Stomach (tissue), 19 donors: ENCODE measurements at regions of chr12 and their contacts with region 1.

Region 1: GRCh38 chr12:10354502-10354901 is 35.3 kb downstream of the KLRK1 start:
- DNase-seq: peak in 1 of 2 donors; percentile 24
- H3K4me3 ChIP-seq: no peak overlapping the region
- H3K27ac ChIP-seq: no peak overlapping the region
- H3K4me1 ChIP-seq: peaks cover 0 to 5% (median 0%) of the 10 kb centered on the region in 4 donors
- H3K27me3 ChIP-seq: no peaks in the 10 kb centered on the region
- CTCF ChIP-seq: no peak
- EP300 ChIP-seq: no peak
- POLR2A ChIP-seq: no peak

Region 2: GRCh38 chr12:10641735-10642500 is 287.4 kb after region 1 on chr12:
- intact Hi-C with region 1: no loop called
- DNase-seq: peak in 1 of 2 donors; percentile 55
- H3K4me3 ChIP-seq: no peak overlapping the region
- H3K27ac ChIP-seq: peak overlapping the region in 3 of 5 donors; percentile 26 to 46 (median 30)
- H3K4me1 ChIP-seq: peaks cover 0 to 10% (median 0%) of the 10 kb centered on the region in 4 donors
- H3K27me3 ChIP-seq: no peaks in the 10 kb centered on the region
- CTCF ChIP-seq: no peak
- EP300 ChIP-seq: no peak
- POLR2A ChIP-seq: no peak

Region 3: DNA sequence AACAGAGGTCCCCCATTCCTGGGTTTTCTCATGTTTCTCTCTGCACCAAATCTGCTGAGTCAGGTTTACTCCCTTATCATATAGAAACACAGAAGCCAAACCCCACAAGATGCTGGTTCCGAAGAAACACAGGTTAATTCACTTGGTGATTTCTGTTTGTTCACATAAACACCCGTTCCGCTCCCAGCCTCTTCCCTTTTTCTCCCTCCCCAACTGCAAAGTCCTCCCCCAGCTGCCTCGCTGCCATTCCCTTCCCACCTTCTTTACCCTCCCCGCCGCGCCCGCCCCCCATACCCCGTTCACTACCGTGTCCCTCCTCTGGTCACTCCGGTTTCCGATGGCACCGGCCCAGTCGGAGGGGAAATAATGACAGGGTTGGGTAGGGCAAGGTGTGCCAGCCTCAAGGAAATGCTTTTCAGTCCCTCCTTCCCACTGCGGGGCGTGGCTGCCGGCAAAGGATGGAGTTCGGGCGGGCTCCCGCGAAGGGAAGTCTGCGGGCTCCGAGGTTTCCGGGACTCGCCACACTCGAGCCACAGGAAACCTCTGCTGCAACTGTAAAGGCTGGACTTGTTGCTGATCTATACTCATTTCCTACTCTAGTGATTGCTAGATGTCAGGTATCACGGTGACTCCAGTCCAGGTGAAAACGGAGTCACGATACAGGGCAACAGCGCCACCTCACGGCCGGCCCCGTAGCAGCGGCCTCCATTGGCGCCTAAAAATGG is 319.3 kb after region 1 on chr12 and contains the start of gene STYK1:
- intact Hi-C with region 1: loop called (anchors 10 kb)
- DNase-seq: peak; percentile 85 to 90
- H3K4me3 ChIP-seq: peak within 1 kb of the TSS; percentile 39 to 64 (median 53)
- H3K27ac ChIP-seq: peak within 1 kb of the TSS; percentile 79 to 97 (median 89)
- H3K4me1 ChIP-seq: peaks cover 0 to 27% (median 16%) of the 10 kb centered on the region in 4 donors
- H3K27me3 ChIP-seq: peaks cover 0 to 16% (median 3%) of the 10 kb centered on the region in 3 donors
- CTCF ChIP-seq: peak in 5 of 7 experiments; percentile 73 to 93 (median 89)
- EP300 ChIP-seq: no peak
- POLR2A ChIP-seq: no peak
- total RNA-seq, gene STYK1: 2.3 to 23.7 (median 12.0) TPM